AG04450 (cell line): ENCODE measurements at regions of chr5 and their contacts with region 1.

Region 1: DNA sequence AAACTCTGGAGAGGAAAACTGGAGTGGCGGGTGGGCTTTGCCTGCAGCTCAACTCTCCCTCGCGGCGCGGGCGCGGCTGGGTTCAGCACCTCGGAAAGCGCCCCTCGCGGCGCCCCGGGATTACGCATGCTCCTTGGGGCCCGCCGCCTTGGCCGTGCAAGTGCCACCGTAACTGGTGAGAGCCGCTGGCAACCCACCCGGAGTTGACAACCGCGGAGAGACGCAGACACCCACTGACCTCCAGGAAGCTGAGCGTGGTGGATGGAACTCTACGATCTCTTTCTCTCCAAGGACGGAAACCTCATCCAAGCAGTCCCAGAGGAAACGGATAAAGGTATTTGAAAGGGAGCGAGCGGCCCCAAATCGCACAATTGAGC is 194 bp upstream of the RXFP3 start:
- DNase-seq: peak; percentile 7
- H3K4me3 ChIP-seq: peak overlapping the region; percentile 60
- H3K27ac ChIP-seq: no peak overlapping the region
- H3K27me3 ChIP-seq: peaks cover 49% of the 10 kb centered on the region
- CTCF ChIP-seq: no peak

Region 2: DNA sequence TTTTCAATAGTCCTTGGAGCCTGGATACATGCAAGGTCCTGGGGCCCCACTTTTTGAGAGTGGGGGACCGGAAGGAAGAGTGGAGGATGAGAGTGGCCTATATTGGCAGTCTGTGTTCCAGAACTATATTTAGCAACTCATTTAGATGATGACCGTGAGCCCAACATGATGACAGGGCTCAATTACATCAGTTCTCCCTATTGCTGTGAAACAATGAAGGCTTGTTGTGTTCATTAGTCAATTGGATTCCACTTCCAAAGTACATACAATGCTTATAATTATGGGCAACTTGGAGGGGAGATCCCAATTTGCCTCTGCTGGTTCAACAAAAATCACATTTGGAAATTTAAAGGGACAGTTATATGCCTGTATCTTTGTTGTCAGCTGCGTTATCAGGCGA is 404.2 kb before region 1 on chr5:
- CTCF ChIA-PET with region 1: interaction called, 10 read pairs
- POLR2A ChIA-PET with region 1: no interaction called
- DNase-seq: no peak
- H3K4me3 ChIP-seq: no peak overlapping the region
- H3K27ac ChIP-seq: no peak overlapping the region
- H3K27me3 ChIP-seq: no peaks in the 10 kb centered on the region
- CTCF ChIP-seq: no peak

Region 3: DNA sequence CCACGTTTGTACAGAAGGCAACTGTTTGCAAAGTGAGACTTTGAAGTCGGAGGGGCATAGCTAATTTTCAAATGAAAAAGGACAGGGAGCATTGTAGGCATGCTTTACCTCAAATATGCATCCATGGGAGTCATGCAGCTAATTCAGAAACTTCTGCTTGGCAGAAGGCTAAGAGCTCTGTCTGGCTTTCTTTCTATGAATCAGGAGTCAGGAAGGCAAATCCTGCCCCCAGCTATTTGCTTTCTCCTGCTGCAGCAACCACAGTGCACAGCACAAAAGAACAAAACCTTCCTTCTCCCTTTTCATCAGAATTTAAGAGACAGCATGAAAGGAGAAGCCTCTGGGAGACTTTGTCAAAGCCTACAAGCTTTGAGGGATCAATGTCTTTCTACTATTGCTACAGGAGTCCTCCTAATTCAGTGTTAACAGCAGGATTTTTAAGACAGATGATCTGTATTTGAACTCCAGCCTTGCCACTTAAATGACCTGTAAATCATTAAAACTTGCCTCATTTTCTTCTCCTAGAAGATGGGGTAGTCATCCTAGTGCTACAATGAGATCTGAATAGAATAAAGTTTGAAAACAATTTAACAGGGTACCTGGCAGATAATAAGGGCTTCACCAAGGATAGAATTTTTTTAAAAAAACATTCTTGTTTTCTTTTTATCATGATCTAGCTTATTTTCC is 286.1 kb before region 1 on chr5:
- CTCF ChIA-PET with region 1: interaction called, 16 read pairs
- POLR2A ChIA-PET with region 1: no interaction called
- DNase-seq: peak; percentile 55
- H3K4me3 ChIP-seq: no peak overlapping the region
- H3K27ac ChIP-seq: no peak overlapping the region
- H3K27me3 ChIP-seq: no peaks in the 10 kb centered on the region
- CTCF ChIP-seq: no peak

Region 4: DNA sequence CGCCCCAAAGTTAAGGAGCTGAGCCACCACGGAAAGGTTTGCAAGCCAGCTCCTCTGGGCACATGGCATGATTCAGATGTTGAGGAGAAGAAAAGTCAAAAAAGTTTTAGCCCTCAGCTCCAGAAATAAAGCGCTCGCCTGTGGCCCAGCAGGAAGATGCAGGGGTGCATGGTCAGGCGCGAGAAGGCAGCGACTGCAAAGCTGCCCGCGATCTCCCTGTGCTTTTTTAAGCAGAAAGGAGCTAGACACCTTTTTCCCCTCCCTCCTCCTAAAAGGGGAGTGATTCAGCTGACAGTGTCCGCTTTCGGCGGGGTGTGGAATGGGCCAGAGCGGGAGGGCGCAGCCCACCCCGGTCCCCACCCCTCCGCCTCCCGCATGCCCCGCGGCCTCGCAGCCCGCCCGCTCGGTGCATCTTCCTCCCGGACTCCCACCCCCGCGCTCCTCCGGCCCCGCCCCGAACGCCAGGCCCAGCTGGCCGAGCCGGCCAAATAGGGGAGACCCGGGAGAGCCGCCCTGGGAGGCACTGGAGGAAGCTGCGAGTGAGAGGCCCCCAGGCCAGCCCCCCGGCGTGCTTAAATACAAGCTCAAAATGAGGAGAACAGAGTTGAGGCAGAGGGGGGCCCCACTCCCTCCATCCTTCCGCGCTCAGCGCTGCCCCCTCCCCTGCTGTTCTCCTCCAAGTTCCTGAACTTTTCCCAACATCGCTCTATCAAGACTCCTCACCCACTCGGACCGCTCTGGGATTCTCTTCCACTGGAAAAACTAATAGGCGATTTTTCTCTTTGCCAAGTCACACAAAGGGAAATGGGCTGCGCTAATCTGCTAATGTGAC is 44.0 kb before region 1 on chr5 and contains the start of gene ADAMTS12:
- CTCF ChIA-PET with region 1: interaction called, 26 read pairs
- POLR2A ChIA-PET with region 1: no interaction called
- DNase-seq: peak; percentile 48
- H3K4me3 ChIP-seq: peak within 1 kb of the TSS; percentile 79
- H3K27ac ChIP-seq: peak within 1 kb of the TSS; percentile 89
- H3K27me3 ChIP-seq: no peaks in the 10 kb centered on the region
- CTCF ChIP-seq: no peak
- polyA plus RNA-seq, gene ADAMTS12: 46.8 and 47.6 TPM in 2 replicates

Region 5: DNA sequence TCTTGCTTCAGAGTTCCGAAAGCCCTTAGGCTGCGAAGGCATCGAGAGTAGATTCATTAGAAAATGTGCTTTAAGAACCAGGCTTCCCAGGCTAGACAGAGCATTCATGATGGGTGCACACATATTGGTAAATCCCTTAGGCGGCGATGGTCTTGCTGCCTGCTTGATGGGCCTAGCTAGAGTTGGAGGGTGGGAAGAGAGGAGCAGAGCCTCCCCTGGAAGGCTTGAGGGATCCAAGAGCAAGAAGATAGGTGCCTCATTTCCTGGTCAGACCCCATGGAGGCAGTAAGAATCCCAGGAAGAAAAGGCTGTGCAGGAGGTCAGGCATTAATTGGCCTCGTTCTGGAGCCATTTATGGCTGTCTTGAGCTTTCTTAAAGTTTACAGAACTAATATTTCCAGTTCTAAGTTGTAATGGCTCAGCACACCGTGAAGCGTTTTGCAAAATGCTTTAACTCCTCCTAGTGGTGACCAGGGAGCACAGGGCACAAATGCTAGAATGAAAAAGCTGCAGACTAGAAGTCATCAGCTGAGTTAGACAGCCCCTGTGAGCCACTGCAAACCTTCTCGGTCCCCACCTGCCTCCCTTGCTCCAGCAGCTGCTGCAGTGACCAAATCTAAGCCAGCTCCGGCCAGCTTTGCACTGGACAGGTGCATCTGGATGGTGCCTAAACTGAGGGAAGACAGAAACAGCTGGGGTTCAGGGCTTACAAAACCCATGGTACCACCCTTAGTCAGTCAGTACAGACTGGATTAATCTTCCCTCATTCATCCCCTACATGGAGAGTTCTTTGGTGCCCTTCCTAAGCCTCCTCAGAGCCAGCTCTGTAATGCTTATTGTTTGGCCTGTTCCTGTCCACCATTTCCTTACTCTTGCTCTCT is 33.8 kb after region 1 on chr5:
- CTCF ChIA-PET with region 1: interaction called, 21 read pairs
- POLR2A ChIA-PET with region 1: no interaction called
- DNase-seq: peak; percentile 43
- H3K4me3 ChIP-seq: no peak overlapping the region
- H3K27ac ChIP-seq: no peak overlapping the region
- H3K27me3 ChIP-seq: peaks cover 11% of the 10 kb centered on the region
- CTCF ChIP-seq: peak; percentile 96